ENCODE measurements at regions of chr5 and their contacts with region 1.

Region 1: DNA sequence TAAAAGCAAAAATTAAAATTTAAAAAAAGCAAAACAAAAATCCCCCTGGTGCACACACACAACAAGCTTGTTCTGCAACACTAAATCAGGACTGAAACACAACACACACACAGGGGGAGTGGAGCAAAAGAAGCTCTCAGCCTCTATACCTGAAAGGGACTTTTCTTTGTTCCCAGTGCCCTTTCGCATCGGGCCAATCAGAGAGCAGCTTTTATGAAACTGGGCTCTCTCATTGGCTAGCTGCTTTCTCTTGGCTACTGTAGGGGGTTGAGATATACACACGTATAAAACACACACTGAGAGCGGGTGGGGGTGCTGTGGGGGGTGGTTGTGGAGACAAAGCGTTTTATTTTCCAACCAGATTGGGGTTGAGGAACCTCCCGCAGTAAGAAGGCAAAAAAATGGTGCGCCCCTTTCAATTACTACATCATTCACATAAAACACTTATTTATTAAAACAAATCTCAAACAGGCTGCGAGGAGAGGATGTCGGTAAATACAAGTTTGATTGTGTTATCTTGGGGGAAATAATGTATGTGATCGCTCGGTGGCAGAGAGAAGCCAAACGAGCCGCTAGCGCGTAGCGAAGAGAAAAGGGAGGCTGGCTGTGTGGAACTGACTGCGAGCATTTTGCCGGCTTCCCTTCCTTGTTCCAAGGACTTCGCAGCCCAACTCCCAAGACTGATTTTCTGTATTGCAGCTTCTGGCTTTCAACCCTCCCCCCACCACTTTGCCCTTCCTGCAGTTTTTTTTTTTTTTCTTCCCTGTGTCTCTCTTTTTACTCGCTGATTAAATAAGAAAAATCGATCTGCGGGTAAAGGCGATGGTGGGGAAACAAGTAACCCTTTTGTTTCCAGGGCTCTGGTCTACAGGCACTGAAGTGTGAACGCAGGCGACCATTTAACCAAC is 2.5 kb upstream of the ZNF608 start:
- DNase-seq: peak; percentile 37
- ATAC-seq: peak; percentile 71
- H3K4me3 Mint-ChIP-seq: no peak overlapping the region
- H3K27ac Mint-ChIP-seq: no peak overlapping the region
- H3K4me1 Mint-ChIP-seq: peaks cover 17% of the 10 kb centered on the region
- H3K27me3 Mint-ChIP-seq: no peaks in the 10 kb centered on the region
- CTCF ChIP-seq: no peak

Region 2: DNA sequence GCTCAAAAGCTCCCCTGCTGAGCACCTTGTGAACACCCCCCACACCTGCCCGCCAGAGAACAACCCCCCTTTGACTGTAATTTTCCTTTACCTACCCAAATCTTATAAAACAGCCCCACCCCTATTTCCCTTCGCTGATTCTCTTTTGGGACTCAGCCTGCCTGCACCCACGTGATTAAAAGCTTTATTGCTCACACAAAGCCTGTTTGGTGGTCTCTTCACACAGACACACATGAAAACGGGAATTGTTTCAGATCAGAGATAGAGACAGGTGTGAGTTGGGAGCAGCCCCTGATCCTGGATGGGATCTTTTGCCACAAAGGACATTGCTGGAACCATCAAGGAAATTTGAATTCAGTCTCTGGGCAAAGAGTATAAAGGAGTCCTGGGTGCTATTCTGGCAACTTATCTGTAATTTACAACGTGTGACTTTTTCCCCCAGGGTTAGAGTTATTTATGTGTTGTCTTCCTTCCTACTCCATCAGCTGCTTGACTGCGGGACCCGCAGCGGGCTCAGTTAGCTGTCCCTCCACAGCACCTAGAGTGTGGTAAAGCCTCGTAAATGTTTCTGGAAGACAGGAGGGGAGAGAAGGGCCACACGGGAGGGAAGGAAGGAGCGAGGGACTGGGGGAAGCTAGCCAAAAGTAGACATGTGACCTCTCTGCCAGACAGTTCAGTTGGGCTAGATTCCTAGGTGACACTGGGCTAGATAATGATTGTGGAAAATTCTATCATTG is 439.5 kb before region 1 on chr5:
- CTCF ChIA-PET with region 1: no interaction called
- POLR2A ChIA-PET with region 1: interaction called, 10 read pairs
- intact Hi-C with region 1: no loop called
- DNase-seq: no peak
- ATAC-seq: no peak
- H3K4me3 Mint-ChIP-seq: no peak overlapping the region
- H3K27ac Mint-ChIP-seq: no peak overlapping the region
- H3K4me1 Mint-ChIP-seq: peaks cover 3% of the 10 kb centered on the region
- H3K27me3 Mint-ChIP-seq: no peaks in the 10 kb centered on the region
- CTCF ChIP-seq: no peak

Region 3: DNA sequence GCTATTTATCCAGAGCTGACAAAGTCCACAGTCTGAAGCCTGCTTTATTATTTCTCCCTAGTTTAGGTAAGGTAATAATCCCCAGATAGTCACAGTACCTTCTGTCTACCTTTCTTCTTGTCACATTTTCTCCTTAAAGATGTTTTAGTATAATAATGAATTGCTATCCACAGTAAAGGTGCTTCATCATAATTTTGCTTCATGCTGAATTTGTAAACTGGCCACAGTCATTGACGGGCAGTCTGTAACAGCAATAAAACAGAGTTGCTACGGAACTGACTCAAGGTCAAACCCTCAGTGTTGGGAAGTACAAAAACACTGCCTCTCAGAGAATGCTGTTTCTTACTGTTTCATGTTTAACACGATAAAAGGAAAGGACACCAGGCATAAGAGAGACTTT is 198.2 kb before region 1 on chr5:
- CTCF ChIA-PET with region 1: no interaction called
- POLR2A ChIA-PET with region 1: no interaction called
- intact Hi-C with region 1: no loop called
- DNase-seq: no peak
- ATAC-seq: no peak
- H3K4me3 Mint-ChIP-seq: no peak overlapping the region
- H3K27ac Mint-ChIP-seq: no peak overlapping the region
- H3K4me1 Mint-ChIP-seq: peaks cover 6% of the 10 kb centered on the region
- H3K27me3 Mint-ChIP-seq: no peaks in the 10 kb centered on the region
- CTCF ChIP-seq: no peak

Region 4: DNA sequence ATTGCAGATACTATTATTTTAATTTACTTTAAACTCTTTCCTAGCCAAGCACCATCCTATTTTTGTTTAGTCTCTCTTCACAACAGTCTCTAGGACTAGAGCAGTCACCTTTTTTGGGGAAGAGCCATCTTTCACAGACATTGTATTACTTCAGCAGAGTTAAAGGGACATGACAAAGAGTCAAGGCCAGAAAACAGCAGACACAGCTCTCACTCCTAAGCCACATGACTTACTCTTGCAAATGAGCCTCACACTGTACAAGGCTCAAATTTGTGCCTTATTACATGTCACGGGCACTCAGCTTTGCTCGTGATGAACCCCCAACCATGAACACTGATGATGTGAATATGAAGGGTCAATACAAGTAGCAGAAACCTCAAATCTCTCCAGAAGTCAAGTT is 106.8 kb before region 1 on chr5:
- CTCF ChIA-PET with region 1: interaction called, 4 read pairs
- POLR2A ChIA-PET with region 1: interaction called, 14 read pairs
- intact Hi-C with region 1: no loop called
- DNase-seq: no peak
- ATAC-seq: no peak
- H3K4me3 Mint-ChIP-seq: no peak overlapping the region
- H3K27ac Mint-ChIP-seq: no peak overlapping the region
- H3K4me1 Mint-ChIP-seq: peaks cover 34% of the 10 kb centered on the region
- H3K27me3 Mint-ChIP-seq: no peaks in the 10 kb centered on the region
- CTCF ChIP-seq: no peak

Region 5: GRCh38 chr5:124735169-124735858 is 13.6 kb before region 1 on chr5:
- CTCF ChIA-PET with region 1: interaction called, 3 read pairs
- POLR2A ChIA-PET with region 1: interaction called, 40 read pairs
- intact Hi-C with region 1: loop called (anchors 1 kb)
- DNase-seq: no peak
- ATAC-seq: peak; percentile 45
- H3K4me3 Mint-ChIP-seq: peak overlapping the region; percentile 73
- H3K27ac Mint-ChIP-seq: peak overlapping the region; percentile 54
- H3K4me1 Mint-ChIP-seq: peaks cover 82% of the 10 kb centered on the region
- H3K27me3 Mint-ChIP-seq: no peaks in the 10 kb centered on the region
- CTCF ChIP-seq: no peak

Region 6: GRCh38 chr5:124927735-124928134 is 178.8 kb after region 1 on chr5:
- CTCF ChIA-PET with region 1: interaction called, 3 read pairs
- POLR2A ChIA-PET with region 1: interaction called, 14 read pairs
- intact Hi-C with region 1: no loop called
- DNase-seq: no peak
- ATAC-seq: no peak
- H3K4me3 Mint-ChIP-seq: no peak overlapping the region
- H3K27ac Mint-ChIP-seq: no peak overlapping the region
- H3K4me1 Mint-ChIP-seq: no peaks in the 10 kb centered on the region
- H3K27me3 Mint-ChIP-seq: no peaks in the 10 kb centered on the region
- CTCF ChIP-seq: no peak

Region 7: GRCh38 chr5:125829349-125829748 is 1080.4 kb after region 1 on chr5:
- CTCF ChIA-PET with region 1: no interaction called
- POLR2A ChIA-PET with region 1: no interaction called
- intact Hi-C with region 1: loop called (anchors 1 kb)
- DNase-seq: peak; percentile 31
- ATAC-seq: peak; percentile 98
- H3K4me3 Mint-ChIP-seq: no peak overlapping the region
- H3K27ac Mint-ChIP-seq: no peak overlapping the region
- H3K4me1 Mint-ChIP-seq: peaks cover 8% of the 10 kb centered on the region
- H3K27me3 Mint-ChIP-seq: peaks cover under 1% of the 10 kb centered on the region
- CTCF ChIP-seq: no peak

Measured in activated B cell treated with CpG ODN at 0.5 μM for 24 hours (primary cell).